PC-3 (cell line): ENCODE measurements at regions of chr14 and their contacts with region 1.

Region 1: GRCh38 chr14:77151918-77152588 is 10.5 kb upstream of the ZDHHC22 start:
- DNase-seq: peak; percentile 82
- ATAC-seq: peak; percentile 79
- H3K4me3 ChIP-seq: no peak overlapping the region
- H3K27ac ChIP-seq: no peak overlapping the region
- H3K4me1 ChIP-seq: no peaks in the 10 kb centered on the region
- H3K27me3 ChIP-seq: peaks cover 8% of the 10 kb centered on the region
- CTCF ChIP-seq: peak; percentile 61

Region 2: GRCh38 chr14:77105145-77105939 is 46.7 kb before region 1 on chr14:
- CTCF ChIA-PET with region 1: no interaction called
- POLR2A ChIA-PET with region 1: no interaction called
- intact Hi-C with region 1: no loop called
- DNase-seq: no peak
- ATAC-seq: no peak
- H3K4me3 ChIP-seq: no peak overlapping the region
- H3K27ac ChIP-seq: no peak overlapping the region
- H3K4me1 ChIP-seq: no peaks in the 10 kb centered on the region
- H3K27me3 ChIP-seq: no peaks in the 10 kb centered on the region
- CTCF ChIP-seq: no peak

Region 3: GRCh38 chr14:77212943-77213678 is 61.1 kb after region 1 on chr14:
- CTCF ChIA-PET with region 1: interaction called, 14 read pairs
- POLR2A ChIA-PET with region 1: interaction called, 3 read pairs
- intact Hi-C with region 1: loop called (anchors 2 kb)
- DNase-seq: peak; percentile 95
- ATAC-seq: peak; percentile 94
- H3K4me3 ChIP-seq: no peak overlapping the region
- H3K27ac ChIP-seq: no peak overlapping the region
- H3K4me1 ChIP-seq: peaks cover 3% of the 10 kb centered on the region; the same call in 1 of the 2 replicates
- H3K27me3 ChIP-seq: peaks cover 21% of the 10 kb centered on the region
- CTCF ChIP-seq: peak; percentile 97

Region 4: DNA sequence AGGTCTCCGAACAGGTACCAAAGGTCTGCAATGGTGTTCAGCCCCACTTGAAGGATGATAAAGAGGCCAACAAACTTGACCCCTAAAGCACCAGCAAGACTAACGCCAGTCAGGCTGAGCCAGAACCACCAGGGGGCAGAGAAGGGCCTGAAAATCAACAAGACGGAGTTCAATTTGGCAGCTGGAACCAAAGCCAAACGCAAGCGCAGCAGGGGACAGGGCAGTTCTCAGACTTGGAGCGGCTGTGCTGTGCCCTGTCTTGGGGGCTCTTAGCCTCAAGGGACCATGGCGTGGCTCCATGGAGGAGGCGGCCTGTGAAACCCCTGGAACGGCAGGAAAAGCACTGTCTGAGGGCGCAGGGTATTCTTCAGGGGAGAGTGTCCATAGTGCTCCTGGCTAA is 149.1 kb after region 1 on chr14:
- CTCF ChIA-PET with region 1: no interaction called
- POLR2A ChIA-PET with region 1: no interaction called
- intact Hi-C with region 1: loop called (anchors 5 kb)
- DNase-seq: peak; percentile 88
- ATAC-seq: peak; percentile 12; the same call in 1 of the 2 replicates
- H3K4me3 ChIP-seq: no peak overlapping the region
- H3K27ac ChIP-seq: no peak overlapping the region
- H3K4me1 ChIP-seq: peaks cover 33% of the 10 kb centered on the region
- H3K27me3 ChIP-seq: no peaks in the 10 kb centered on the region
- CTCF ChIP-seq: peak; percentile 99

Region 5: GRCh38 chr14:77314043-77314442 is 162.0 kb after region 1 on chr14:
- CTCF ChIA-PET with region 1: interaction called, 24 read pairs
- POLR2A ChIA-PET with region 1: no interaction called
- intact Hi-C with region 1: loop called (anchors 1 kb)
- DNase-seq: peak; percentile 92
- ATAC-seq: peak; percentile 87
- H3K4me3 ChIP-seq: no peak overlapping the region
- H3K27ac ChIP-seq: peak overlapping the region; percentile 73
- H3K4me1 ChIP-seq: peaks cover 46% of the 10 kb centered on the region
- H3K27me3 ChIP-seq: no peaks in the 10 kb centered on the region
- CTCF ChIP-seq: peak; percentile 21; the same call in 1 of the 2 replicates

Region 6: GRCh38 chr14:77554207-77554606 is 402.2 kb after region 1 on chr14:
- CTCF ChIA-PET with region 1: no interaction called
- POLR2A ChIA-PET with region 1: no interaction called
- intact Hi-C with region 1: loop called (anchors 5 kb)
- DNase-seq: no peak
- ATAC-seq: no peak
- H3K4me3 ChIP-seq: no peak overlapping the region
- H3K27ac ChIP-seq: no peak overlapping the region
- H3K4me1 ChIP-seq: no peaks in the 10 kb centered on the region
- H3K27me3 ChIP-seq: no peaks in the 10 kb centered on the region
- CTCF ChIP-seq: no peak